Heart left ventricle (tissue), 16 donors: ENCODE measurements at regions of chr1 and their contacts with region 1.

Region 1: GRCh38 chr1:226649780-226650179 is 89.3 kb downstream of the ITPKB start:
- DNase-seq: peak in 2 of 5 donors; percentile 40 to 41
- ATAC-seq: peak in 1 of 4 donors; percentile 21
- H3K4me3 ChIP-seq: no peak overlapping the region
- H3K27ac ChIP-seq: peak overlapping the region in 5 of 12 donors; percentile 12 to 52 (median 38)
- H3K4me1 ChIP-seq: peaks cover 4 to 56% (median 32%) of the 10 kb centered on the region in 12 donors
- H3K27me3 ChIP-seq: no peaks in the 10 kb centered on the region
- CTCF ChIP-seq: peak in 10 of 12 donors; percentile 4 to 48 (median 26)
- POLR2A ChIP-seq: no peak

Region 2: GRCh38 chr1:226457307-226457712 is 192.5 kb before region 1 on chr1:
- intact Hi-C with region 1: no loop called
- DNase-seq: no peak
- ATAC-seq: no peak
- H3K4me3 ChIP-seq: no peak overlapping the region
- H3K27ac ChIP-seq: no peak overlapping the region
- H3K4me1 ChIP-seq: no peaks in the 10 kb centered on the region
- H3K27me3 ChIP-seq: no peaks in the 10 kb centered on the region
- CTCF ChIP-seq: peak in 2 of 12 donors; percentile 4 to 21
- POLR2A ChIP-seq: no peak

Region 3: GRCh38 chr1:226687426-226687825 is 37.6 kb after region 1 on chr1:
- intact Hi-C with region 1: loop called in 1 of 10 experiments (anchors 5 kb)
- DNase-seq: no peak
- ATAC-seq: peak; percentile 27 to 68 (median 55)
- H3K4me3 ChIP-seq: no peak overlapping the region
- H3K27ac ChIP-seq: peak overlapping the region in 10 of 12 donors; percentile 29 to 87 (median 64)
- H3K4me1 ChIP-seq: peaks cover 19 to 99% (median 86%) of the 10 kb centered on the region in 12 donors
- H3K27me3 ChIP-seq: no peaks in the 10 kb centered on the region
- CTCF ChIP-seq: peak in 9 of 12 donors; percentile 16 to 39 (median 28)
- POLR2A ChIP-seq: no peak